ENCODE measurements at regions of chr11 and their contacts with region 1.

Region 1: DNA sequence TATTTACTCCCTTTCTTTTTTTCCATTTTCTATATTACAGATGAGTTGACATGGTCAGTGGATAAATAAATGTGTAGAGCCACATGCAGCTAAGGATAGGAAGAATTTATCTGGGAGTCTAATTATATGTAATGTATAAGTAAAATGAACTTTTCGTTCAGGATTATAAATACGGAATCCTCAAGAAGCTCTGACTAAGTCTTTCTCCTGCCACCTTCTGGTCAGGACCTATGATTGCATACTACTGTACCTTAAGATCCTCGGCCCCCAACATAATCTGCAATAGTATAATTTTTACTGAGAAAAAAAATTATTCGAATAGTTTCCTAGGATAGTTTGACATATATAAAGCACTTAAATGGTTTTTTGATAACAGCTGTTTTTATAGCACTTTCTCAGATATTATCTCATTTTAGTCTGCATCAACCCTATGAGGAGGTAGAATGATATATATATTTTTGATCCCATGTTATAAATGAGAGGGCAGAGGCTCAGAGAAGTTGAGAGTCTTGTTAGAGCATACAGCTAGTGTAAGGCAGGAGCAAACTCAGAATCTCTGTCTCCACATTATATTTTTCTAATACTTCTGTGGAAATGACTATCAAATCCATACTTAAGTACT is 36.1 kb downstream of the CCDC90B start:
- DNase-seq: peak; percentile 20
- H3K4me3 ChIP-seq: no peak overlapping the region
- H3K27ac ChIP-seq: no peak overlapping the region
- H3K4me1 ChIP-seq: no peaks in the 10 kb centered on the region
- H3K27me3 ChIP-seq: no peaks in the 10 kb centered on the region
- CTCF ChIP-seq: peak; percentile 62 to 69

Region 2: GRCh38 chr11:82906244-82906654 is 343.8 kb before region 1 on chr11:
- CTCF ChIA-PET with region 1: no interaction called
- dilution Hi-C with region 1: no loop called
- in situ Hi-C with region 1: loop called (anchors 5 to 10 kb)
- intact Hi-C with region 1: loop called (anchors 1 kb)
- DNase-seq: peak; percentile 6
- H3K4me3 ChIP-seq: peak overlapping the region in 1 of 3 experiments; percentile 11
- H3K27ac ChIP-seq: no peak overlapping the region
- H3K4me1 ChIP-seq: peaks cover 6% of the 10 kb centered on the region
- H3K27me3 ChIP-seq: no peaks in the 10 kb centered on the region
- CTCF ChIP-seq: peak; percentile 34 to 53

Region 3: GRCh38 chr11:83063073-83063754 is 186.9 kb before region 1 on chr11:
- CTCF ChIA-PET with region 1: no interaction called
- dilution Hi-C with region 1: no loop called
- in situ Hi-C with region 1: no loop called
- intact Hi-C with region 1: no loop called
- DNase-seq: no peak
- H3K4me3 ChIP-seq: no peak overlapping the region
- H3K27ac ChIP-seq: no peak overlapping the region
- H3K4me1 ChIP-seq: peaks cover 9% of the 10 kb centered on the region
- H3K27me3 ChIP-seq: no peaks in the 10 kb centered on the region
- CTCF ChIP-seq: no peak

Region 4: GRCh38 chr11:83827940-83828554 is 578.0 kb after region 1 on chr11:
- CTCF ChIA-PET with region 1: no interaction called
- dilution Hi-C with region 1: loop called (anchors 10 kb)
- in situ Hi-C with region 1: no loop called
- intact Hi-C with region 1: no loop called
- DNase-seq: no peak
- H3K4me3 ChIP-seq: no peak overlapping the region
- H3K27ac ChIP-seq: no peak overlapping the region
- H3K4me1 ChIP-seq: no peaks in the 10 kb centered on the region
- H3K27me3 ChIP-seq: no peaks in the 10 kb centered on the region
- CTCF ChIP-seq: peak; percentile 49 to 56